Activated CD4-positive, alpha-beta T cell treated with anti-CD3 and anti-CD28 coated beads, Interleukin-2, amount 10 ng/mL, durations not matched to agents 7 days and 5 days (primary cell): ENCODE measurements at regions of chr12 and their contacts with region 1.

Region 1: GRCh38 chr12:6470375-6471163 is at the start of gene VAMP1:
- DNase-seq: peak; percentile 100
- H3K4me3 Mint-ChIP-seq: peak within 1 kb of the TSS; percentile 96
- H3K27ac Mint-ChIP-seq: peak within 1 kb of the TSS; percentile 92
- H3K4me1 Mint-ChIP-seq: peaks cover 56% of the 10 kb centered on the region
- H3K27me3 Mint-ChIP-seq: peaks cover 6% of the 10 kb centered on the region
- total RNA-seq, gene VAMP1: 61.4 to 73.4 TPM

Region 2: DNA sequence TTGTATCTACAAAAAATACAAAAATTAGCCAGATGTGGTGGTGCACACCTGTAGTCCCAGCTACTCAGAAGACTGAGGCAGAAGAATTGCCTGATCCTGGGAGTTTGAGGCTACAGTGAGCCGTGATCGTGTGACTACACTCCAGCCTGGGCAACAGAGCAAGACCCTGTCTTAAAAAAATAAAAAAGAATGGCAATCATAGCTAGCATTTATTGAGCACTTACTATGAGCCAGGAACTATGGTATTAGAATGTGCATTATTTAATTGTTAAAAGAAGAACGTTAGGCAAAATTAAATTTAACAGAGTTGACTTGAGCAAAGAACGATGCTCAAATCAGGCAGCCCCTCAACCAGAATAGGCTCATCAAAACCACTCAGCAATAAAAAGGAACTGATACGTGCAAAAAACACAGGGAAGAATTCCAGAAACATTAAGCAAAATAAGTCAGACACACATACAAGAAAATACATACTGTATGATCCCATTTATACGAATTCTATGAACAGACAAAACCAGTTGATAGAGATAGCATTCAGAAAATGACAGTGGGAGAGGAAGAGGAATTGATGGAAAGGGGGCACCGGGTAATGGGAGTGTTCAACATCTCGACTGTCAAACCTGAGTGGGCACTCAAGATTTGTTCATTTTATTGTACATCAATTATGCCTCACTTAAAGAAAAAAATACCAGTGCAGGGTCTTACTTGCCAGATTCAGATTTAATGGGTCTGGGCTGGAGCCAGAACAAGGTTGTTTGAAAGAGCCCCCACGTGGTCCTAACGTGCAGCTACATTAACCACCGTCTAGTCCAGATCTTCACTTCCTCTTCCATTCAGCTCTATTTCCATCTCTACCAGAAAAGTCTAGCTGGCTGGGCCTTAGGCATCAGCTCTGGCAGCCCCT is 103.3 kb before region 1 on chr12:
- CTCF ChIA-PET with region 1: no interaction called
- POLR2A ChIA-PET with region 1: no interaction called
- DNase-seq: peak; percentile 50
- H3K4me3 Mint-ChIP-seq: no peak overlapping the region
- H3K27ac Mint-ChIP-seq: no peak overlapping the region
- H3K4me1 Mint-ChIP-seq: peaks cover 41% of the 10 kb centered on the region
- H3K27me3 Mint-ChIP-seq: no peaks in the 10 kb centered on the region

Region 3: DNA sequence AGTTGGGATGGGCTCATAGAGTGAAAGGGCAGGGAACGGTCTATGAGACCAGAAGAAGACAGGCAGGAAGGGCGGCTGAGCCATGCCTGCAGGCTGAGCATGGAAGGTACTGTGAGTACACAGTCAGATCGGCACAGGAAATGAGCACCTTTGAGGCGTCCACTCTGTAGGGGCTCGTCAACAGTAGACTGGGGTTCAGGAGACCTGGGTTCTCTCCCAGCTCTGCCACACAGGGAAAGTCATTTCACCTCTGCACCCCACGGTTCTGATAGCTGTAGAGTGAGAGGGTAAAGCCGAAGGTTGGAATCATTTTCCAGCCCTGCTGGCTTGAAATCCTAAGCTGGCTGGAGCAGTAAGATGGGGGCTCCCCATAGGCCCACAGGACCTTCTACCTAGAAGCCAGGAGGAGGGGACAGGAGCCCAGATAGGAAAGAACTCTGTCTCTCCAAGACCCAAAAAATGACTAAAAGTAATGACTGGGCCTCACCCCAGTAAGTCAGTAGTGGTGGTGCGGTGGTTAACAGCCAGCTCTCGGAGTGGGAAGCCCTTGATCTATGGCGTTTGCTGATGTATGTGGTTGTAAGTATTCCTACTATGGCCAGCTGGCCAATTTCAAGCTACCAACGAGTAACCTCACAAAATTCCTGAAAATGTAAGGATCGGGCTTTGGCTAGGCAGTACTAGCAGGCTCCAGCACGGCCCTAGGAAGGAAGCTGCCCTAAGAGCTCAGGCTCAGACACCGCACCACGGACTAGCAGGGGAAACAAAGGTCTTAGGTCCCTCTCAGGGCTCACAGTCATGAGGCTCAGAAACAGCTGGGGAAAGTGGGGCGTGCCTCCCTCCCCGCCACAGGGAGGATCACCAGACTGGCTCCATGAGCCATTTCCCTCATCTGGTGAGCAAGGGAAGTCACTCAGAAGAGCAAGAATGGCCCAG is 36.1 kb before region 1 on chr12:
- CTCF ChIA-PET with region 1: interaction called, 10 read pairs
- POLR2A ChIA-PET with region 1: no interaction called
- DNase-seq: peak; percentile 56
- H3K4me3 Mint-ChIP-seq: no peak overlapping the region
- H3K27ac Mint-ChIP-seq: peak overlapping the region; percentile 93
- H3K4me1 Mint-ChIP-seq: peaks cover 52% of the 10 kb centered on the region
- H3K27me3 Mint-ChIP-seq: no peaks in the 10 kb centered on the region

Region 4: DNA sequence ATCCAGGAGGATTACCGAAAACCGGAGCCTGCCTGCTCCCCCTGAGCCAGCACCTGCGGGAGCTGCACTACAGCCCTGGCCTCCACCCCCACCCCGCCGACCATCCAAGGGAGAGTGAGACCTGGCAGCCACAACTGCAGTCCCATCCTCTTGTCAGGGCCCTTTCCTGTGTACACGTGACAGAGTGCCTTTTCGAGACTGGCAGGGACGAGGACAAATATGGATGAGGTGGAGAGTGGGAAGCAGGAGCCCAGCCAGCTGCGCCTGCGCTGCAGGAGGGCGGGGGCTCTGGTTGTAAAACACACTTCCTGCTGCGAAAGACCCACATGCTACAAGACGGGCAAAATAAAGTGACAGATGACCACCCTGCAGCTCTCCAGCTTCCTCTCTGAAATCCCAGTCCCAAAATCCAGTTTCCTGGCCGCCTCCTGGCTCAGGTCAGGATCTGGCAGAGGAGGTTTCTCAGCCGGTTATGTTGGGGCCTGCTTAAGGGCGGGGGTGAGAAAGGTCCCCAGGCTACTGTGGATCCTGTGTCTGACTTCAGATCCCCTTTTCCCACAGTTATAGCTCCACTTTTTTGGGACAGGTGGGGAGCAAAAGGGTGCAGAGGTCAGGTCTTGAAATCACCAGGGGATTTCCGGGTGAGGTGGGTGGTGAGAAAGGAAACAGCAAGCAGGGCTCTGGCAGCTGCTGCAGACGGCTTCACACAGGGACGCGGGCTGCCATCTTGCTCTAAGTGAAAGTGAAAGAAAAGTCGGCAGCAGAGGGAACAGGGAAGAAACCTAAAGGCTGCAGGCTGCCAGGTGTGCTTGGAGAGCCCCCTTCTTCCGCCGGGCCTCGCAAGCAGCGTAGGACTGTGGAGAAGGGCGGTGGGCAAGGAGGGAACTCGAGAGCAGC is 19.0 kb before region 1 on chr12 and contains the start of gene TAPBPL:
- CTCF ChIA-PET with region 1: interaction called, 31 read pairs
- POLR2A ChIA-PET with region 1: interaction called, 8 read pairs
- DNase-seq: peak; percentile 88
- H3K4me3 Mint-ChIP-seq: peak within 1 kb of the TSS; percentile 100
- H3K27ac Mint-ChIP-seq: peak within 1 kb of the TSS; percentile 98
- H3K4me1 Mint-ChIP-seq: peaks cover 71% of the 10 kb centered on the region
- H3K27me3 Mint-ChIP-seq: no peaks in the 10 kb centered on the region
- total RNA-seq, gene TAPBPL: 45.8 to 47.9 TPM

Region 5: GRCh38 chr12:6533923-6534694 is 63.5 kb after region 1 on chr12 and contains the start of gene GAPDH:
- CTCF ChIA-PET with region 1: interaction called, 8 read pairs
- POLR2A ChIA-PET with region 1: interaction called, 10 read pairs
- DNase-seq: peak; percentile 91
- H3K4me3 Mint-ChIP-seq: peak within 1 kb of the TSS; percentile 90
- H3K27ac Mint-ChIP-seq: peak within 1 kb of the TSS; percentile 98
- H3K4me1 Mint-ChIP-seq: peaks cover 52% of the 10 kb centered on the region
- H3K27me3 Mint-ChIP-seq: no peaks in the 10 kb centered on the region
- total RNA-seq, gene GAPDH: 4,459 to 4,958 TPM

Region 6: GRCh38 chr12:6620137-6620884 is 149.7 kb after region 1 on chr12:
- CTCF ChIA-PET with region 1: no interaction called
- POLR2A ChIA-PET with region 1: no interaction called
- DNase-seq: peak; percentile 57
- H3K4me3 Mint-ChIP-seq: no peak overlapping the region
- H3K27ac Mint-ChIP-seq: peak overlapping the region; percentile 78
- H3K4me1 Mint-ChIP-seq: peaks cover 25% of the 10 kb centered on the region
- H3K27me3 Mint-ChIP-seq: no peaks in the 10 kb centered on the region